Activated CD8-positive, alpha-beta T cell treated with anti-CD3 and anti-CD28 coated beads, Interleukin-2, amount 10 ng/mL, durations not matched to agents 7 days and 5 days (primary cell): ENCODE measurements at regions of chr2 and their contacts with region 1.

Region 1: DNA sequence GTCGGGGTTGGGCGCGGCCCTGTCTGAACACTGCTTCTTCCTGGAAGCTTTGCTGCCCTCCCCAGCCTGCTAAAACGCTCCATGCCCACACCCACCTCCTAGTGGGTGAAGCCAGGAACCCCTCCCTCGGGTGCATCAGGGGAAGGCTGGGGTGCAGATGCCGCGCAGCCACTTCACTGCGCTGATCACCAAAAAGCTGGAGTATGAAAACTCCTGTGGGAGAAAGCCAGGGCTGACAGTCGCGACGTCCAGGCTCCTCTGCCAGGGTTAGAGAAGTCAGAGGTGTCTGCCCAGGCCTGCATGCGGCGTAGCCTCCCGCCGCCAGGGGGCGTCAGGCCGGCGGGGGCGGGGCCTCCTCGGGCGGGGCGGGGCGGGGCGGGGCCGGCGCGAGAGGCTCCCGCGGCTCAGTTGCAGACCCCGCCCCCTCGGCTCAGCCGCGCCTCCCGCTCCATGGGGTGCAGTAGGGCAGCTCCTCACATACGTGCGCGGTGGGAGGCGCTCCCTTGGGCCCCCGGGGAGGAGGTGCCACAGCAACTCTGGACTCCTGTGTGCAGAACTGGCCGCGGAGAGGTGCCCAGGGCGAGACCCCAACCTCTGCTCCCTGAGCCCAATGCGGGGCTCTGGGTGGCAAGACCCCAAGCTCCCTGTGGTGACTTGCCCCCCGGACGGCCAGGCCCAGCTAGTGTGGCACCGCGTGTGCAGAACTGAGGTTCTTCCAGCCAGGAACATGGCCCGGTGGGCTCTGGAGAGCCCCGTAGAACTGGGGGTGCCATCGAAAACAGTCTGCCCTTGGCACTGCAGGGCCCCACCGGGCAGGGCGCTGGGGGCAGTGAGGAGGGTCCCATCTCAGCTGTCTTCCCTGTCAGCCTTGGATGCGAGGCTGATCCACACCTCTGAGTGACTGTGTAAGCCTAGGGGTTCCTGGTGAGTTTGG is 1.8 kb upstream of the RNPEPL1 start:
- DNase-seq: peak; percentile 98
- ATAC-seq: peak; percentile 70
- H3K4me3 Mint-ChIP-seq: peak overlapping the region; percentile 86
- H3K27ac Mint-ChIP-seq: peak overlapping the region; percentile 97
- H3K4me1 Mint-ChIP-seq: peaks cover 77% of the 10 kb centered on the region
- H3K27me3 Mint-ChIP-seq: no peaks in the 10 kb centered on the region

Region 2: DNA sequence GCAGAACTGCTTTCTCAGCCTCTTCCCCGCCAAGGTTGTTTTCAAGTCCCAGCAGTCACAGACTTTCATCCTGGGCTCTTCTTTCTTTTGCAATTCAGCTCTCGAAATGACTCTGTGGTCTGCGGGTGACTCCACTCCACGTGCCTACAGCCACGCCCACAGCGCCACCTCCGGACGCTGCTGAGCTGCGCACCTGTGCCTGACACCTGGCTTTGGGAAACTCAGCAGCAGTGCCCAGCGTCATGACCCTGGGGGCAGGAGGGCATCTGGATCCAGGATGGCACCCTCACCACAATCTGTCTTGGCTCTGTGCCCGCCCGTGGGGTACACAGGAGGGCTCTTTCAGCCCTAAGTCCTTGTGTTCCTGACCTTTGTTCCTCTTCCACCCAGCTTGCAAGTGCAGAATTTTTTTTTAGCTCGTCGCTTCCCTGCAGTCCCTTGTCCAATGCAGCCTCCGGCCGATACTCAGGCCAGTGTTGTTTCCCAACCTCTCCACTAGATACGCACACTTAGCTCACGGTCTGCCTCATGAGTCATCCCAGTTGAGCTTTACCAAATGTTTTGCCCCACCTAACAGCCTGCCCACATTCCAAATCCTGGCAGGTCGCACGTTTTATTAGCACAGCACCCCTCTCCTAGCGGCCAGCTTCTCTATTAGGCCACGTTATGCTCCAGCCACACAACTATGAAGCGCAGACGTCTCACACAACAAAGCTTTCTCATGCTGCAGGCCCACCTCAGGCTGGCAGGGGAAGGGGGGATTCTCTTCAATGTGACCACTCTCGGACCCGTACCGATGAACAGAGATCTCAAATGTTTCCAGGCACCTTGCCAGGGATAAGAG is 13.5 kb after region 1 on chr2:
- CTCF ChIA-PET with region 1: interaction called, 119 read pairs
- POLR2A ChIA-PET with region 1: interaction called, 53 read pairs
- DNase-seq: peak; percentile 77
- ATAC-seq: peak; percentile 81
- H3K4me3 Mint-ChIP-seq: no peak overlapping the region
- H3K27ac Mint-ChIP-seq: peak overlapping the region; percentile 74
- H3K4me1 Mint-ChIP-seq: peaks cover 41% of the 10 kb centered on the region
- H3K27me3 Mint-ChIP-seq: no peaks in the 10 kb centered on the region

Region 3: GRCh38 chr2:240586198-240586918 is 19.9 kb after region 1 on chr2 and contains the start of gene CAPN10:
- CTCF ChIA-PET with region 1: interaction called, 119 read pairs
- POLR2A ChIA-PET with region 1: interaction called, 53 read pairs
- DNase-seq: peak; percentile 98
- ATAC-seq: peak; percentile 91
- H3K4me3 Mint-ChIP-seq: peak within 1 kb of the TSS; percentile 97
- H3K27ac Mint-ChIP-seq: peak within 1 kb of the TSS; percentile 92
- H3K4me1 Mint-ChIP-seq: peaks cover 47% of the 10 kb centered on the region
- H3K27me3 Mint-ChIP-seq: no peaks in the 10 kb centered on the region
- total RNA-seq, gene CAPN10: 53.0 to 61.2 TPM

Region 4: DNA sequence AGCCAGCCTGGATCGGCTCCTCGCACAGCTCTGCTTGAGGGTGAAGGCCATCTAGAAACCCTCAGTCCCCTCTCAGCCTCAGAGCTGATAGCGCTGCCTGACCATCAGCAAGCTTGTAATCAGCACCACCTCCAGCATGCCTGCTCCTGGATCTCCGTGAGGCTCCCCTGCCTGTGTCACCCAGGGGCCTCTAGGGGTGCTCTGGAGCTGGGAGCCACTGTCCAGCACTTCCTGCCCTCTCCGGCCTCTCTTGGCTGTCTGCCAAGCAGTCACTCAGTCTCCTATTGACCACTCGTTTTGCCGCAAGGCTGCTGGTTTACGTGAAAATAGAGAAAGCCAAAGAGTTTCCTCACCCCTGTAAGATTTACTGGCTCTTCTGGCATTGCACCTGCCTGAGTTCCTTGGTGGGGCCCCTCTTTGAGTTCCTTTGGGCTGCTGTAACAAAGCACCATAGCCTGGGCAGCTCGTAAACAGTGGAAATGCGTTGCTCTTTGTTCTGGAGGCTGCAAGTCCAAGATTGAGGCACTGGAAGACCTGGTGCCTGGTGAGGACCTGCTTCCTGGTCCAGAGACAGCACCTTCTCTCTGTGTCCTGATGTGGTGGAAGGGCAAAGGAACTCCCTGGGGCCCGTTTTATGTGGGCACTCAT is 37.9 kb after region 1 on chr2:
- CTCF ChIA-PET with region 1: interaction called, 11 read pairs
- POLR2A ChIA-PET with region 1: no interaction called
- DNase-seq: no peak
- ATAC-seq: no peak
- H3K4me3 Mint-ChIP-seq: no peak overlapping the region
- H3K27ac Mint-ChIP-seq: peak overlapping the region; percentile 57
- H3K4me1 Mint-ChIP-seq: peaks cover 1% of the 10 kb centered on the region
- H3K27me3 Mint-ChIP-seq: no peaks in the 10 kb centered on the region

Region 5: DNA sequence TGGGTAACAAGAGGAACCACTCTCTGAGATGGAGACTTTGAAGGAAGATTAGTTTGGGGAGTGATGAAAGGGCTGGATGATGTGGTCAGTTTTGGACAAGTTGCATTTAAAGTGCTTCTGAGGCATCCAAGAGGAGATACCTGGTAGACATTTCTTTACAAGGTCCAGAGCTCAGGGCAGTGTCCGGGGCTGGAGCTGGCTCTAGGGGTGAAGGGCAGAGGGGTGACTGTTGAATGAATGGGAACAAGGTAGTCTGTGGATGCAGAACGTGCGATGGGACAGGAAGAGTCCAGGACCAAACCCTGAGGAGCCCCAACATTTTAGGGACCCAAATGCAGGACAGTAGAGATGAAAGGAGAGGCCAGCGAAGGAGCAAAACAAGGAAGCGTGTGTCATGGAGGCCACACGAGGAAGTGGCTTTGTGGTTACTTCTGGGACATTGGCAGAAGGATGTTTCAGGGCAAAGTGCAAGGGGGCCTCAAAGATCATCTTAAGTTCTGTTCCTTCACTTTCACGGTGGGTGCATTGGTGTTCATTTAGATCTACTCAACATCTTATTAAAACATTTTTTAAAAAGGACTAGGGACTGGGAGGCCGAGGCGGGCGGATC is 45.2 kb after region 1 on chr2:
- CTCF ChIA-PET with region 1: interaction called, 16 read pairs
- POLR2A ChIA-PET with region 1: interaction called, 6 read pairs
- DNase-seq: peak; percentile 67
- ATAC-seq: peak; percentile 28
- H3K4me3 Mint-ChIP-seq: no peak overlapping the region
- H3K27ac Mint-ChIP-seq: no peak overlapping the region
- H3K4me1 Mint-ChIP-seq: peaks cover 18% of the 10 kb centered on the region
- H3K27me3 Mint-ChIP-seq: no peaks in the 10 kb centered on the region

Region 6: DNA sequence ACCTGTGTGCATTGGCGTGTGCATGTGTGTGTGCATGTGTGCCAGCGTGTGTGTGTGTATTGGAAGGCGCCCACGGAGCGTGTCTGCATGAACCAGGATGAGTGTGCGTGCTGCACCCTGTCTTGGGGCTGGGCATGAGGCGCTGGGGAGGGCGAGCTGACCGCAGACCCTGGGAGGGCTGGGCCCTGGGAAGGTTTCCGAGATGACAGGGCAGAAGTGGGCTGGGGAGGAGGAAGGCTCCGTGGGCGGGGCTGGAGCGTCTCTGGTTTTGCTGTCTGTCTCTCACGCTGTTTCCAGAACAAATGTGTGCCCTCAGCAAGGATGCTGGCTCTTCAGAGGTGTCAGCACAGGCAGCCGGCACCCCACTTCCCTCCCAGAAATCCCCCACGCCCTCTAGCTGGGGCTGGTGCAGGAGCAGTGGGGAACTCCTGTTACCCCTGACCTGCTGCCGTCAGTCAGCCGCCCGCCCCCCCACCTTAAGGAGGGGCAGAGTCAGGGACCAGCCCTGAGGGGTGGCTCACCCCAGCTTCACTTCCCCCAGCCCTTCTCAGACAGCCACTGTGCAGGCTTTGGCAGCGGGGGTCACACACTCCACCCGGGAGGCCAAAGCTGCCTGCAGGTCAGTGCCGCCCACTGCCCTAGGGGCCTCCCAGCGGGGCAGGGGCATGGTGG is 58.6 kb after region 1 on chr2 and contains the start of gene GPR35:
- CTCF ChIA-PET with region 1: interaction called, 25 read pairs
- POLR2A ChIA-PET with region 1: interaction called, 24 read pairs
- DNase-seq: peak; percentile 89
- ATAC-seq: peak; percentile 60
- H3K4me3 Mint-ChIP-seq: peak within 1 kb of the TSS; percentile 78
- H3K27ac Mint-ChIP-seq: peak within 1 kb of the TSS; percentile 95
- H3K4me1 Mint-ChIP-seq: peaks cover 73% of the 10 kb centered on the region
- H3K27me3 Mint-ChIP-seq: no peaks in the 10 kb centered on the region
- total RNA-seq, gene GPR35: 21.6 to 23.8 TPM